Activated CD4-positive, alpha-beta T cell treated with anti-CD3 and anti-CD28 coated beads, Interleukin-2, amount 10 ng/mL, durations not matched to agents 7 days and 5 days (primary cell): ENCODE measurements at regions of chr1 and their contacts with region 1.

Region 1: GRCh38 chr1:24939040-24939674 is 9.1 kb upstream of the RUNX3 start:
- DNase-seq: no peak
- H3K4me3 Mint-ChIP-seq: no peak overlapping the region
- H3K27ac Mint-ChIP-seq: no peak overlapping the region
- H3K4me1 Mint-ChIP-seq: peaks cover 77% of the 10 kb centered on the region
- H3K27me3 Mint-ChIP-seq: no peaks in the 10 kb centered on the region

Region 2: GRCh38 chr1:24914226-24915069 is 24.7 kb before region 1 on chr1:
- CTCF ChIA-PET with region 1: no interaction called
- POLR2A ChIA-PET with region 1: no interaction called
- DNase-seq: no peak
- H3K4me3 Mint-ChIP-seq: no peak overlapping the region
- H3K27ac Mint-ChIP-seq: peak overlapping the region; percentile 50
- H3K4me1 Mint-ChIP-seq: peaks cover 45% of the 10 kb centered on the region
- H3K27me3 Mint-ChIP-seq: no peaks in the 10 kb centered on the region

Region 3: DNA sequence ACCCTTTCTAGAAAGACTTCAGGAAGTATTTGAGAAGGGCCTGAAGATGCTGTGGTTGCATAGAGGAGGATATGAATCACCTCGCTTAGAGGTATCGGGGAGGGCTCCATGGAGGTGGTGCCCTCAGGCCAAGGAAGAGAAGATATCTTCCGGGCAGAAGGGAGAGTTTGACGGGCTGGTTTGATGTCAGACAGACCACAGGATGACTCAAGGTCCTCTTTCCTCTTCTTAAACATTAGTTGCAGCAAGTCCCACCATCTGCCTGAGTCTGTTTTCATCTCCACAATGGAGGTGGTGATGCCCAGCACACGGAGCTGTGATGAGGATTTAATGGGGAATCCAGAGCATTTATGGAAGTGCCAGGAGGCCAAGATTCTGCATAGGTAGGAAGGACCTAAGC is 16.0 kb after region 1 on chr1:
- CTCF ChIA-PET with region 1: interaction called, 14 read pairs
- POLR2A ChIA-PET with region 1: no interaction called
- DNase-seq: peak; percentile 79
- H3K4me3 Mint-ChIP-seq: peak overlapping the region; percentile 63
- H3K27ac Mint-ChIP-seq: peak overlapping the region; percentile 93
- H3K4me1 Mint-ChIP-seq: peaks cover 97% of the 10 kb centered on the region
- H3K27me3 Mint-ChIP-seq: no peaks in the 10 kb centered on the region